ENCODE measurements at regions of chr7 and their contacts with region 1.

Region 1: GRCh38 chr7:19708397-19709248 is at the start of gene POLR1F:
- DNase-seq: peak; percentile 93
- H3K4me3 Mint-ChIP-seq: peak within 1 kb of the TSS; percentile 93
- H3K27ac Mint-ChIP-seq: peak within 1 kb of the TSS; percentile 90
- H3K4me1 Mint-ChIP-seq: peaks cover 38% of the 10 kb centered on the region
- H3K27me3 Mint-ChIP-seq: no peaks in the 10 kb centered on the region

Region 2: DNA sequence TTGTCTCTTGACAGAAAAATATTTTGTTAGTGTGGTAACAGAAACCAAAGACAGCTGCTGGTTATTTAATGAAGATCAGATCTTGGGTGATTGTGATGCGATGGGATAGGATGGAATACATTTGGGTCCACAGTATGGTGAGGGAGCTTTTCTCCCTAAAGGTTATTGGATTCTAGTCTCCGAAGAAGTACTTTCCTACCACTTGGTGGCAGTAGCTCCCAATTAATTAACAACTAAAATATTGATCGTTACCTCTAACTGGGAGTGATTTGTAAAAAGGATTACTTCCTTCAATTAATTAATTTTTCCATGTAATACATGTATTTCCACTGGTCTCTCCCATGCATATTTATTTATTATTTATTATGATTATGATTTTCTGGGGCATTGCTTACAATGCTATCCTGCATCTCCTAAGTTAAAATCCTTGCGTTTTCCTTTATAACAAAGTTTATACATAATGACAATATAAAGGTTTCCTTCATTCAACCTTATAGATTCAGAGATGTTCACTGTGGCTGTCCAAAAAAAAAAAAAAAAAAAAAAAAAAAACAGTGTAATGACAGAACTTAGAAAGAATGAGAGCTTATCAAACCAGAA is 39.2 kb after region 1 on chr7:
- CTCF ChIA-PET with region 1: interaction called, 10 read pairs
- DNase-seq: no peak
- H3K4me3 Mint-ChIP-seq: no peak overlapping the region
- H3K27ac Mint-ChIP-seq: no peak overlapping the region
- H3K4me1 Mint-ChIP-seq: no peaks in the 10 kb centered on the region
- H3K27me3 Mint-ChIP-seq: no peaks in the 10 kb centered on the region

Region 3: DNA sequence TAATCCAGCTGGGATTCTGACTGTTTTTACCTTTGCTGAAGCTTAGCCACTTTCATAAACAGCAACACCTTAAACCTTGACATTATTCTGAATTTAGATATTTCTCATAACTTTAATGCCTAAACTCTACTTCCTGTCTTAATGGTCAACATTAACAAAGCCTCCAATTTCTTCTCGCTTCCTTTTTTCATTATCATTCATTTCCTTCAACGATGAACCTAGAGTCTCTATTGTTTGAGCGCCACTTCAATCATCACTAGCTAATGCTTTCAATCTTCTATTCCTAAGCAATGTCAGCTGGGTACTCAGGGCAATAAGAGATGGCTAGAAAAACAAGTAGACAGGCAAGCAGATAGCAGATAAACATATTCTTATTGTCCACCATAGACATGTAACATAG is 161.4 kb after region 1 on chr7:
- CTCF ChIA-PET with region 1: no interaction called
- DNase-seq: no peak
- H3K4me3 Mint-ChIP-seq: no peak overlapping the region
- H3K27ac Mint-ChIP-seq: no peak overlapping the region
- H3K4me1 Mint-ChIP-seq: no peaks in the 10 kb centered on the region
- H3K27me3 Mint-ChIP-seq: no peaks in the 10 kb centered on the region

Measured in activated naive CD4-positive, alpha-beta T cell treated with anti-CD3 and anti-CD28 coated beads, Interleukin-2, amount 10 ng/mL, durations not matched to agents 7 days and 5 days (primary cell).